ENCODE measurements at regions of chr2 and their contacts with region 1.

Region 1: DNA sequence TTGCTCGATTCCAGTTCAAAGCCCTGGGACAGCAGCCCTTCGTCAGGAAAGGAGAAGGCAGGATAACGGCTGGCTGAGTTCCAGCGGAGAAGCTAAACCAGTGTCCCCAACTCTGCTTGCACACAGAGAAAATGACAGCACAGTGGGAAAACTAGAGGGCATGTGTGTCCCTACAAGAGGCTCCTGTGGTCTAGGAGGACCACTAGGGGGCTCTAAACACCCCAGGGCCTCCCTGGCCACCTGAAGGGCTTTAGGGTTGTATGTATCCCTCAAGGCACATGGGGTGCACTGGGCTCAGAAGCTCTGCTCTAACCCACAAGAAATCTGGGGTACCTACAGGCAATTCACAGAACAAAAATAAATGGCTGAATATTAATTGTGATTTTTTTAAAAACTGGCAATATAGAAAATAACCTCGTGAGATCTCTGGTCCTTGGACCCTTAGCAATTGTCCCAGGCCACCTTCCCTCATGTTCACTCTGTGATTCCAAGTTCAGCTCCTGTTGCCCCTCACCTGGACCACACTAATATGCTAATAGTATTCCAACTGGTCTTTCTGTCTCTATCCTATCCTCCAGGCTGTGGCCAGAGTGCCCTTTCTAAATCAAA is 17.5 kb downstream of the STAT1 start:
- DNase-seq: no peak
- H3K4me3 Mint-ChIP-seq: no peak overlapping the region
- H3K27ac Mint-ChIP-seq: peak overlapping the region; percentile 87
- H3K4me1 Mint-ChIP-seq: peaks cover 71% of the 10 kb centered on the region
- H3K27me3 Mint-ChIP-seq: no peaks in the 10 kb centered on the region

Region 2: DNA sequence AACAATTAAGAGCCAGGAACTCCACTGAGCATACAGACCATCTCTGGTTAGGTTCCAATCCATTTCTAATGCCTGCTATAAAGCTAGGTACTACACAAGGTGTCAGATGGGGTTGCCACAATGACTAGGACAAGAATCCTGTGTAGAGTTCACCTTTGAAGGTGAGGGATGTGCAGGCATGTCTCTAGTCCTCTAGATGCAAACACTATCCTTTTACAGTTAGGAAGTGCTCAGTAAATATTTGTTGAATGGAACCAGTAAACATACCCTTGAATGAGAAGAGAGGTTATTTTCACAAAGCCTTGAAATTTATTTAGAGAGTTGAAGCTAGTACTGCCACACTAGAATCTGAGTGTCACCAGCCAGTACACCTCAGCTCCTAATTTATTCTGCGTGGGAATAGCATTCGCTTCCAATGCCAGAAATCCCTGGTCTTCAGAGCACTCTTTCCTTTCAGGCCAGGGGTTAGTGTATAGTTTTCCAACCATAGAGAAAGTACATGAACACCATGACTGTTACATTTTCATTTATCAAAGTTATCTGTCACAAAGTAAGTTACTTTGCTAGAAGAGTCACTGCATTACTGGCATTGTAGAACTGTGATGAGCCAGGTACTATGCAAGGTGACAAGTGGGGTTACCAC is 30.7 kb before region 1 on chr2:
- intact Hi-C with region 1: loop called (anchors 5 kb)
- DNase-seq: no peak
- H3K4me3 Mint-ChIP-seq: no peak overlapping the region
- H3K27ac Mint-ChIP-seq: peak overlapping the region; percentile 18
- H3K4me1 Mint-ChIP-seq: peaks cover 48% of the 10 kb centered on the region
- H3K27me3 Mint-ChIP-seq: no peaks in the 10 kb centered on the region

Region 3: GRCh38 chr2:191030521-191031154 is 34.2 kb after region 1 on chr2:
- intact Hi-C with region 1: loop called (anchors 1 kb)
- DNase-seq: peak; percentile 31
- H3K4me3 Mint-ChIP-seq: no peak overlapping the region
- H3K27ac Mint-ChIP-seq: peak overlapping the region; percentile 42
- H3K4me1 Mint-ChIP-seq: peaks cover 70% of the 10 kb centered on the region
- H3K27me3 Mint-ChIP-seq: no peaks in the 10 kb centered on the region

Measured in activated T-helper 1 cell treated with anti-CD3 and anti-CD28 coated beads, Interleukin-12 subunit alpha, Interleukin-12 subunit beta, Interleukin-2, Interleukin-4 antibody, amounts not matched to agents 30 ng/mL and 10 ng/mL and 1 ng/mL, durations not matched to agents 14 hours and 24 hours and 36 hours (primary cell).